Head of caudate nucleus (tissue), 42 donors: ENCODE measurements at regions of chr19 and their contacts with region 1.

Region 1: GRCh38 chr19:40716655-40717324 is at the starts of genes COQ8B and ITPKC:
- DNase-seq: peak; percentile 99 to 100 (median 100)

Region 2: DNA sequence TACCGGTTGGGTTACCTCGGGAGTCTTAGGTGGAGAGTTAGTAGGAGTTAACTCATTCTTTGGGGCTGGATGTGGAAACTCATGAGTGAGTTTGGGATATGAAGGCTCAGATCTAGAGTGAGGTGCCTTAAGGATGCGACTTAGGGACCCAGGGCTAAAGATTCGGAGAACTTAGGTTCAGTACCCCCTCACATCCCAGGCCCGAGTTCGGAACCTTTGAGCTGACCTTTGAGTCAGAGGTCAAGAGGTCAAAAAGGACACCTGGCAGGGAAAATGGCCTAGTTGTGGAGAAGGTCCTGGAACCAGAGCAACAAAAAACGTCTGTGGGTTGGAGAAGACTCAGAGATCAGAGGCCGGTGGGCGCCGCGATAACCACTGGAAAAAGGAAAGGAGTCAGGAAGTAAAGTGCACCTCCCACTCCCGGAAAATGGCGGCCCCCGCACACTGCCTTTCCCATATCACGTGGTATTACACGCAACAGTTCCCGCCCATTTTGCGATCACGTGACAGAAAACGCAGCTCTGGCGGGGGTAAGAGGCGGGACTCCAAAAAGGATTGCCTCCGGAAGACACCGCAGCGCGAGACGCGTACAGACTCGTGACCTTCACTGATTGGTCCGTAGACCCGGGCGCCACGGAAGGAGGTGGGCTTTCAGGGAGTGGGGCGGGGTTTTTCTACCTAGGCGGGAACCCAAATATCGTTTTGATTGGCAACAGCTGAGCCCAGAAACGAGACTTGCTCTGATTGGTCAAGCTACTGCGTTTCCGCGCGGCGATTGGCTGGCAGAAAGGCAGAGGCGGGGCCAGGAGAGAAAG is 33.5 kb after region 1 on chr19 and contains the start of gene ACTMAP:
- intact Hi-C with region 1: loop called (anchors 2 kb)
- DNase-seq: peak; percentile 99 to 100 (median 100)

Region 3: GRCh38 chr19:40806488-40807468 is 90.0 kb after region 1 on chr19:
- intact Hi-C with region 1: loop called (anchors 2 kb)
- DNase-seq: peak; percentile 81 to 98 (median 93)